HCT116 (cell line): ENCODE measurements at regions of chr3 and their contacts with region 1.

Region 1: DNA sequence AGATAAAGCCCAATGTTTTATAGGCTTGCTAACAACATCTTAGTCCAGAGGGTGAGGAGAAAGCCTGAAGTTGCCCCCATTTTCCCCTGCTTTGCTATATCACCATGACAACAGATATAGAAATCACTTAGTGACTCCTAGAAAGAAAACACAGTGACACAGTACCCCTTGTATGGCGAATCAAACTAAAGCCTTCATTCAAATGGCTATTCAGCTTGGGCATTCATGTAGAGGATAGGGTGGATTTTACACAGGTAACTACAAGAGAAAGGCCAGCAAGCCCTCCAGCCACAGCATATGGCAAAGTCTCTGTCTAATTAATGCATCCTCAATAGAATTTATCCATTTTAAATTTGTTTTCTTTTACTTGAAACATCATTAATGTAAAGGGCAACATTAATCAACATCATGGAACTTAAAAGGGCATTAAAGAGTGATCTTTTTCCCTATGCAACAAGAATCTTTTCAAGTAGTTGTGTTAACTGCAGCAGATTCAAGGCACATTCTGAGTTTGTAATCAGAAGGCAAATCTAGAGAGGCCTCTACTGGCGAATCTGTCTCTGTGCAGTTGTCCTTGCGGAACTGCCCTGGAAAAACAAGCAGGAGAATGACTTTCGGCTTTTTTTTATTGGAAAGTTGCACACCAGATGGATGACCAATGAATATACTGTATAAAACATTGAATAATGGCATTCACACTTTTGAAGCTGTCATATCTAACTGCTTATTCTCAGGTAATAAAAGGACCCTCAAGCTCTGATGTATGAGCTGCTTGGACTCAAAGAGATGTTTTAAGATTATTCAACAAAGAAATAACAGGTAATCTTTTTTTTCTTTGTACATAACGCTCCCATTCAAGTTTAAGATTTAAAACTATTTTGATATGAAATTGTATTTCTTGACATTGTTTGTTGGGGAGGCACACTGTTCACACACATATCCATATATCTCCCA is 621.7 kb upstream of the AGTR1 start:
- DNase-seq: peak; percentile 38
- ATAC-seq: peak; percentile 90
- H3K4me3 ChIP-seq: no peak overlapping the region
- H3K27ac ChIP-seq: no peak overlapping the region
- H3K4me1 ChIP-seq: no peaks in the 10 kb centered on the region
- H3K27me3 ChIP-seq: no peaks in the 10 kb centered on the region
- CTCF ChIP-seq: peak; percentile 63 to 81 (median 73); a peak in 5 of 6 replicates
- POLR2A ChIP-seq: no peak
- RAD21 ChIP-seq: peak; percentile 81

Region 2: GRCh38 chr3:146817704-146818103 is 1258.3 kb before region 1 on chr3:
- CTCF ChIA-PET with region 1: interaction called, 11 read pairs
- POLR2A ChIA-PET with region 1: no interaction called
- RAD21 ChIA-PET with region 1: no interaction called
- intact Hi-C with region 1: loop called (anchors 2 kb)
- DNase-seq: peak; percentile 26
- ATAC-seq: peak; percentile 76
- H3K4me3 ChIP-seq: no peak overlapping the region
- H3K27ac ChIP-seq: no peak overlapping the region
- H3K4me1 ChIP-seq: no peaks in the 10 kb centered on the region
- H3K27me3 ChIP-seq: no peaks in the 10 kb centered on the region
- CTCF ChIP-seq: peak; percentile 1 to 65 (median 53); a peak in 3 of 6 replicates
- POLR2A ChIP-seq: no peak
- RAD21 ChIP-seq: peak; percentile 71

Region 3: DNA sequence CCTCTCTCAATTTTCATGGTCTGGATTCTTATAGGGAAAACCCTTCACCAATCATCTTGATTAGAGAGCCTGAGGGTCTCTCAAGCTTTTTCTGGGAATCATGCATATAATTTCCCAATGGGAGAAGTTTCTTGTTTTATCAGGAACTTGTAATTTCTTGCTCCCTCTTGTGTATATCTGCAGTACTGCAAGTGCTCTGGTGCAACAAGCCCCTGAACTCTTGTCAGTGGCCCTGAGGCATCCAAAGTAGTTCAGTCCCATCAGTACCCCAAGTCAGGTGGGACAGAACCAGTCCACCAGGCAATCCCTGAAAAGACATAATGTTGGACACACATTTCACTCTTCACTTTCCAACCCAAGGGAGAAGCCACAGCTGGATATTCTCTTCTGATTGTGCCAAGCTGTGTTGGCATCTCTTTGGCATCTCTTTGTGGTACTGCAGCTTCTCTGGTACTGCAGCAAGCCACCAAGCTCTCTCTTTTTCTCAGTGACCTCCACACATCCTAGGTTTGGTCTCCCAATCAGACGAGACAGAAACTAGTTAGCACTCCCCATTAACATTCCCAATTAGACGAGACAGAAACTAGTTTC is 884.1 kb before region 1 on chr3:
- CTCF ChIA-PET with region 1: no interaction called
- POLR2A ChIA-PET with region 1: no interaction called
- RAD21 ChIA-PET with region 1: no interaction called
- intact Hi-C with region 1: loop called (anchors 10 kb)
- DNase-seq: peak; percentile 68
- ATAC-seq: peak; percentile 60; the same call in 1 of the 2 replicates
- H3K4me3 ChIP-seq: no peak overlapping the region
- H3K27ac ChIP-seq: no peak overlapping the region
- H3K4me1 ChIP-seq: no peaks in the 10 kb centered on the region
- H3K27me3 ChIP-seq: no peaks in the 10 kb centered on the region
- CTCF ChIP-seq: peak; percentile 42 to 86 (median 82); a peak in 5 of 6 replicates
- POLR2A ChIP-seq: no peak
- RAD21 ChIP-seq: peak; percentile 67

Region 4: DNA sequence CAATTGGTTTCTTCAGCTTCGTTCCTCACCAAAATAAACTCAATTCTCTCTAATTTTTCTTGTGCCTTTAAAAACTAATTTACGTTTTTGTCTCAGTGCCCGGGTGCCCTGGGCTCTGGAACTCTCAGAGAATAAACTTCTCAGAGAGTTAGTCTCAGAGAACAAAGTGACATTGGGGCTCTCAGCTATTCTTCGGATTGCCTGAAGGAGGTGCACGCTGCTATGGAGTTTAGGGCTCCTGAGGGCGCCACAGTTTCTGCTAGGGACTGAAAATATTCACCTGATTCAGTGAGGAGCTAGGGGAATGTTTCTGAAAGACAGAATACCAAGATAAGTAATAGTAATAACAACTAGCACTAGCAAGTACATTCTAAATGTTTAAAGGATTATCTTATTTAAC is 692.4 kb before region 1 on chr3:
- CTCF ChIA-PET with region 1: interaction called, 6 read pairs
- POLR2A ChIA-PET with region 1: no interaction called
- RAD21 ChIA-PET with region 1: no interaction called
- intact Hi-C with region 1: loop called (anchors 2 kb)
- DNase-seq: peak; percentile 3
- ATAC-seq: peak; percentile 78
- H3K4me3 ChIP-seq: no peak overlapping the region
- H3K27ac ChIP-seq: no peak overlapping the region
- H3K4me1 ChIP-seq: no peaks in the 10 kb centered on the region
- H3K27me3 ChIP-seq: no peaks in the 10 kb centered on the region
- CTCF ChIP-seq: peak; percentile 56 to 65 (median 61)
- POLR2A ChIP-seq: no peak
- RAD21 ChIP-seq: peak; percentile 51

Region 5: GRCh38 chr3:148087601-148088371 is 11.7 kb after region 1 on chr3:
- CTCF ChIA-PET with region 1: interaction called, 17 read pairs
- POLR2A ChIA-PET with region 1: no interaction called
- RAD21 ChIA-PET with region 1: no interaction called
- intact Hi-C with region 1: no loop called
- DNase-seq: no peak
- ATAC-seq: no peak
- H3K4me3 ChIP-seq: no peak overlapping the region
- H3K27ac ChIP-seq: no peak overlapping the region
- H3K4me1 ChIP-seq: no peaks in the 10 kb centered on the region
- H3K27me3 ChIP-seq: no peaks in the 10 kb centered on the region
- CTCF ChIP-seq: no peak
- POLR2A ChIP-seq: no peak
- RAD21 ChIP-seq: no peak

Region 6: DNA sequence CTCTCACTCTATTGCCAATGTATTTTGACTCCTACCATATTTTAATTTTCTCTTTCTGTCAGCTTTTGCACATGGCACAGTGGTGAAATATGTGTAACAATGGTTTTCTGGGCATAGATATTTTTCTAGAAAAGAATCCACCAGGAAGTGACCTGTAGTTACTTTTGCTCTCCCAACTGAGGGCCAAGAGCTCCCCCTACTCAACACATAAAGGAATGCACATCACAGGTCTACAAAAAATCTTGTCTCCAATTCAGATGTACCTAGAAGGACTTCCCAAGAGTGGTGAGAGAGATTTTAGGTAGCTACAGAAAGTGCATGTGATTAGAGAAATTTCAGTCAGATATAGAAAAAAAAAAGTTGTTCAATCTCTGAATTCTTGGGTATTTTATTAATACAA is 804.6 kb after region 1 on chr3:
- CTCF ChIA-PET with region 1: no interaction called
- POLR2A ChIA-PET with region 1: no interaction called
- RAD21 ChIA-PET with region 1: no interaction called
- intact Hi-C with region 1: no loop called
- DNase-seq: peak; percentile 13
- ATAC-seq: peak; percentile 76
- H3K4me3 ChIP-seq: no peak overlapping the region
- H3K27ac ChIP-seq: no peak overlapping the region
- H3K4me1 ChIP-seq: no peaks in the 10 kb centered on the region
- H3K27me3 ChIP-seq: no peaks in the 10 kb centered on the region
- CTCF ChIP-seq: peak; percentile 20 to 45 (median 38); a peak in 4 of 6 replicates
- POLR2A ChIP-seq: no peak
- RAD21 ChIP-seq: peak; percentile 56